ENCODE measurements at regions of chr16 and their contacts with region 1.

Region 1: DNA sequence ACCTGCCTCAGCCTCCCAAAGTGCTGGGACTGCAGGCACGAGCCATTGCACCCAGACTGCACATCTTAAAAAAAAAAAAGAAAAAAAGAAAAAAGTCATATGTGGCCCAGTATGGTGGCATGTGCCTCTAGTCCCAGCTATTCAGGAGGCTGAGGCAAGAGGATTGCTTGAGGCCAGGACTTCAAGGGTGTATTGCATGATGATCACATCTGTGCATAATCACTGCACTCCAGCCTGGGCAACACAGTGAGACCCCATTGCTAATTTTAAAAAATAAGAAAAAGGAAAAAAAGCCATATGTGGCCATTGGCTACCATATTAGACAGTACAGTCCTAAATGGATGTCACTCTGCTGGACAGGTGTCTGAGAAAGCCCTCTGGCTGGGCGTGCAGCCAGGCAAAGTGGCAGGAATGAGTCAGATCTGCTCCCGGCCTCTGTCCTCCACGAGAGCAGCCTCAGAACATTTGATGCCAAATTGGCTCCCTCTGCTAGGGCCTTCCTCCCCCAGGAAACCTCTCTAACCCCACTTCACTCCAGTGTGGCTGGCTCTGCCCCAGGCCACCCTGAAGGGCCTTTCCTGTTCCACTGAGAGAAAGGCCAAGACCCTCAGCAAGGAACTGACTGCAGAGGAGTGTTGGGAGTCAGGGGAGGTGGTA is 14.7 kb downstream of the CA7 start:
- DNase-seq: peak; percentile 72 to 76
- H3K4me3 ChIP-seq: no peak overlapping the region
- H3K27ac ChIP-seq: no peak overlapping the region
- H3K4me1 ChIP-seq: no peaks in the 10 kb centered on the region
- H3K27me3 ChIP-seq: no peaks in the 10 kb centered on the region
- CTCF ChIP-seq: no peak

Region 2: GRCh38 chr16:66476328-66477027 is 382.4 kb before region 1 on chr16:
- CTCF ChIA-PET with region 1: no interaction called
- POLR2A ChIA-PET with region 1: interaction called, 45 read pairs
- intact Hi-C with region 1: no loop called
- DNase-seq: no peak
- H3K4me3 ChIP-seq: no peak overlapping the region
- H3K27ac ChIP-seq: no peak overlapping the region
- H3K4me1 ChIP-seq: peaks cover 48% of the 10 kb centered on the region
- H3K27me3 ChIP-seq: no peaks in the 10 kb centered on the region
- CTCF ChIP-seq: no peak

Region 3: GRCh38 chr16:66552286-66553177 is 306.3 kb before region 1 on chr16 and contains the start of gene CKLF:
- CTCF ChIA-PET with region 1: no interaction called
- POLR2A ChIA-PET with region 1: no interaction called
- intact Hi-C with region 1: no loop called
- DNase-seq: peak; percentile 75 to 91
- H3K4me3 ChIP-seq: peak within 1 kb of the TSS; percentile 66
- H3K27ac ChIP-seq: no peak within 1 kb of the TSS
- H3K4me1 ChIP-seq: peaks cover 30% of the 10 kb centered on the region
- H3K27me3 ChIP-seq: no peaks in the 10 kb centered on the region
- CTCF ChIP-seq: no peak
- total RNA-seq, gene CKLF: 77.1 and 86.4 TPM in 2 replicates